ENCODE measurements at regions of chr2 and their contacts with region 1.

Region 1: GRCh38 chr2:101736861-101737291 is 39.4 kb downstream of the MAP4K4 start:
- DNase-seq: peak; percentile 77
- ATAC-seq: peak; percentile 86
- H3K4me3 Mint-ChIP-seq: no peak overlapping the region
- H3K27ac Mint-ChIP-seq: peak overlapping the region; percentile 51
- H3K4me1 Mint-ChIP-seq: peaks cover 84% of the 10 kb centered on the region
- H3K27me3 Mint-ChIP-seq: no peaks in the 10 kb centered on the region

Region 2: DNA sequence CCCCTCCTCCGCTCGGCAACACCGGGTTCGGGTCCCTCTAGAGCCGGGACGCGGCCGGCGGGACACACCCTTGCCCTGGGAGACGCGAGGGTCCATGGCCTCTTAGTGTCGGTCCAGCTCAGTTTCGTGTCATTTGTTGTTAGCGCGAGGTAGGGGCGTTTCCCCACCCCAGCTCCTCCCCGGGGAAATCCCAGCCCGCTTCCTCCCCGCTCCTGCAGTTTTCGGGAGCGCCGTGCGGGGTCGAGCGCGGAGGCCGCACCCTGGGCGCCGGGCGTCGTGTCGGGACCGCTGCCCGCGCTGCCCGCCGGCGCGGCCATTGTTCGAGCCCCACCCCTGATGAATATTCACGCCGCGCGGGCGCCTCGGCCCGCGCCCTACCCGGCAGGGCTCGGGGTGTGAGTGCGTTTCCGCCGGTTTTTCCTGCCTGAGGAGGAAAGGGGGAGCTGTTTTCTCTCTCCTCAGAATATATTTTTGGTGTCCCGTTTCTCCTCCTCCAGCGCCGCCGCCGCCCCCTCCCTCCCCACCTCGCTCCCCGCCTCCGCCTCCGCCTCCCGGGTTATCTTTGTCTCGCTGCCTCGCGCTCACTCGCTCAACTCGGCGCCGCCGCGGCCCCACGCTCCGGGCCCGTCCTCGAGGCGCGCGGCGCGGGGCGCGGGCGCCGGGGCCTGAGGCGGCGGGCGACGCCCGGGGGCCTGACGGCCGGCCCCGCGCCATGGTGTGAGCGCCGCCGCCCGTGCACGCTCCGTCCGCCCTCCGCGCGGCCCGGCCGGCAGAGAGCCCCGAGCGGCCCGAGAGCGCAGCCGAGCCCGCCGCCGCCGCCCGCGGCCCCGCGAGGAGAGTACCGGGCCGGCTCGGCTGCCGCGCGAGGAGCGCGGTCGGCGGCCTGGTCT is 39.5 kb before region 1 on chr2 and contains the start of gene MAP4K4:
- CTCF ChIA-PET with region 1: interaction called, 7 read pairs
- POLR2A ChIA-PET with region 1: interaction called, 7 read pairs
- intact Hi-C with region 1: loop called in 1 of 2 experiments (anchors 2 kb)
- DNase-seq: peak; percentile 85
- ATAC-seq: peak; percentile 52
- H3K4me3 Mint-ChIP-seq: no peak within 1 kb of the TSS
- H3K27ac Mint-ChIP-seq: peak within 1 kb of the TSS; percentile 68
- H3K4me1 Mint-ChIP-seq: peaks cover 30% of the 10 kb centered on the region
- H3K27me3 Mint-ChIP-seq: no peaks in the 10 kb centered on the region
- total RNA-seq, gene MAP4K4: 62.3 to 70.2 TPM

Region 3: GRCh38 chr2:101704046-101704466 is 32.8 kb before region 1 on chr2:
- CTCF ChIA-PET with region 1: interaction called, 7 read pairs
- POLR2A ChIA-PET with region 1: interaction called, 7 read pairs
- intact Hi-C with region 1: loop called (anchors 1 kb)
- DNase-seq: peak; percentile 54
- ATAC-seq: peak; percentile 18
- H3K4me3 Mint-ChIP-seq: peak overlapping the region; percentile 53
- H3K27ac Mint-ChIP-seq: peak overlapping the region; percentile 90
- H3K4me1 Mint-ChIP-seq: peaks cover 74% of the 10 kb centered on the region
- H3K27me3 Mint-ChIP-seq: no peaks in the 10 kb centered on the region

Region 4: GRCh38 chr2:101759162-101759561 is 22.3 kb after region 1 on chr2:
- CTCF ChIA-PET with region 1: interaction called, 6 read pairs
- POLR2A ChIA-PET with region 1: interaction called, 3 read pairs
- intact Hi-C with region 1: loop called in 1 of 2 experiments (anchors 2 kb)
- DNase-seq: no peak
- ATAC-seq: no peak
- H3K4me3 Mint-ChIP-seq: no peak overlapping the region
- H3K27ac Mint-ChIP-seq: no peak overlapping the region
- H3K4me1 Mint-ChIP-seq: peaks cover 73% of the 10 kb centered on the region
- H3K27me3 Mint-ChIP-seq: no peaks in the 10 kb centered on the region

Region 5: GRCh38 chr2:102251042-102251848 is 514.4 kb after region 1 on chr2:
- CTCF ChIA-PET with region 1: no interaction called
- POLR2A ChIA-PET with region 1: no interaction called
- intact Hi-C with region 1: loop called in 1 of 2 experiments (anchors 10 kb)
- DNase-seq: peak; percentile 85
- ATAC-seq: peak; percentile 68
- H3K4me3 Mint-ChIP-seq: peak overlapping the region; percentile 73
- H3K27ac Mint-ChIP-seq: peak overlapping the region; percentile 76
- H3K4me1 Mint-ChIP-seq: peaks cover 38% of the 10 kb centered on the region
- H3K27me3 Mint-ChIP-seq: no peaks in the 10 kb centered on the region

Measured in activated CD4-positive, alpha-beta T cell treated with anti-CD3 and anti-CD28 coated beads for 36 hours (primary cell).